ENCODE measurements at regions of chr17 and their contacts with region 1.

Region 1: GRCh38 chr17:4891411-4892342 is 7.7 kb upstream of the C17orf107 start:
- DNase-seq: no peak
- ATAC-seq: no peak
- H3K4me3 ChIP-seq: no peak overlapping the region
- H3K4me3 Mint-ChIP-seq: no peak overlapping the region
- H3K27ac ChIP-seq: no peak overlapping the region
- H3K27ac Mint-ChIP-seq: no peak overlapping the region
- H3K4me1 ChIP-seq: no peaks in the 10 kb centered on the region
- H3K4me1 Mint-ChIP-seq: peaks cover 0 to 5% of the 10 kb centered on the region in 2 donors
- H3K27me3 ChIP-seq: no peaks in the 10 kb centered on the region
- H3K27me3 Mint-ChIP-seq: no peaks in the 10 kb centered on the region
- CTCF ChIP-seq: no peak

Region 2: DNA sequence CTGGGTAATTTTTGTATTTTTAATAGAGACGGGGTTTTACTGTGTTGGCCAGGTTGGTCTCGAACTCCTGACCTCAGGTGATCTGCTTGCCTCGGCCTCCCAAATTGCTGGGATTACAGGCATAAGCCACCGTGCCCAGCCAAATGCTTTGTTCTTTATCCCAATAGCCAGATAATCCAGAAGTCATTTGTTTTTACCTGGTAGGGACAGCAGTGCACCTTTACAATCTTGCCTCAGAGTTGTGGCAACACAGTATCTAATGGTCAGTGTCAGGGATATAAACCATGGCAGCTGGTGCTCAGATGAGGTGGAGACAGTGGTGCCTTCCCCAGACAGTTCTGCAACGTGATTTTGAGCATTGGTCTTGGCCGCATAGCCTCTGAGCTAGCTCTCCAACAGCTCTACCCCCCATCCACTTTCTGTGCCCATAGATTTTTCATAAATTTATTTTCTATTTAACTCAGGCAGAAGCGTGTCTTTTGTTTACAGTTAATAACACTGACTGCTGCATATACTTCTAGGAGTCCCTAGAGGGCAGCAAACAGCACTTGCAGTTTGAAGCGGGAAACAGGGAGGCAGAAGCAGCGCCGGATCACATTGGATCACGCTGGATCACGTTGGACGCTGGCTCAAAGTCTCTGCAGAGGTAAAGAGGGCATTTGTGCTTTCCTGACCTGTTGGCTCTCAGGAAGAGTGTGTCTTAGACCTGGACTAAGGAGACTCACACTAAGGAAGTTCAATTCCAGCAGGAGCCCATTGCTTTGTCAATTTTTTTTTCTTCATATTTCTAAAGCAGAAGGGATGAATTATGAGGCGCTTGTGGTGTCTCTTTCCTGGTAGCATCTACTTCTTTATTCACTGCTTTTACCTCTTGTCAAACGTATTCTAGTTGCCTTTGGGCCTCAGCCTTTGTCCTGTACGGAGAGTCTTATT is 326.2 kb before region 1 on chr17:
- intact Hi-C with region 1: loop called (anchors 5 kb)
- DNase-seq: peak in 1 of 2 donors; percentile 82
- ATAC-seq: peak; percentile 73 to 94 (median 84)
- H3K4me3 ChIP-seq: no peak overlapping the region
- H3K4me3 Mint-ChIP-seq: peak overlapping the region; percentile 13
- H3K27ac ChIP-seq: no peak overlapping the region
- H3K27ac Mint-ChIP-seq: no peak overlapping the region
- H3K4me1 ChIP-seq: peaks cover 5% of the 10 kb centered on the region
- H3K4me1 Mint-ChIP-seq: peaks cover 10 to 20% of the 10 kb centered on the region in 2 donors
- H3K27me3 ChIP-seq: no peaks in the 10 kb centered on the region
- H3K27me3 Mint-ChIP-seq: peaks cover 0 to 7% of the 10 kb centered on the region in 2 donors
- CTCF ChIP-seq: peak; percentile 87

Region 3: DNA sequence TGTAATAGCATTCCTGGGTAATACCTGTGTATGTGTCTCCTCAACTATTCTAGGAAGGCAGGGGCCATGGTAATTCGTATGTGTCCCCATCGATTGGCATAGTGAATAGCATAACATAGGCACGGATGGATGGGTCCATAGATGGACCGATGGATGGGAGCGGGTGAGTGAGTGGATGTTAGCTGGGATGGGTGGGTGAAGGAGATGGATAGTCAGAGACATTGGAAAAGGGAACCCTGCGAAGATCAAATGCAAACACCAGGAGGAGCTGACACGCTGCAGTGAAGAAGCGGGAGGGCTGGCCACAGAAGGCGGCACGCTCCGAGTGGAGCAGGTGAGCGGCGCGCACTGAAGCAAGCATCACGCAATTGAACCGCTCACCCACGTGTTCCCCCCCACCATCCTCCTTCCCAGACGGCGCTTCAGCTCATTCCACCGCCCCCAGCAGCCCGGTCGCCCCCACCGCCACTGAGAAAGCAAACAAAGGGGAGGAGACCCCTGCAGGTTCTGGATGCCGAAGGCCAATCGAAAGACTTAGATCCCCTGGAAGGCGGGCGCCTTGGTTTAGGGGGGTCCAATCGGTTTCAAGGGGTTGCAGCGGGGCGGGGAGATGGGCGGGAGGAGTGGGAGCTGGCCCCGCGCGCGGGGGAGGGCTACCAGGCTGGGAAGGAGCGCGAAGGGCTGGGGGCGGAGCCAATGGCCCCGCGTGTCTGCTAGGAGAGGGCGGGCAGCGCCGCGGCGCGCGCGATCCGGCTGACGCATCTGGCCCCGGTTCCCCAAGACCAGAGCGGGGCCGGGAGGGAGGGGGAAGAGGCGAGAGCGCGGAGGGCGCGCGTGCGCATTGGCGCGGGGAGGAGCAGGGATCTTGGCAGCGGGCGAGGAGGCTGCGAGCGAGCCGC is 181.6 kb before region 1 on chr17 and contains the start of gene ARRB2:
- intact Hi-C with region 1: loop called (anchors 1 kb)
- DNase-seq: peak; percentile 96 to 100
- ATAC-seq: peak; percentile 86 to 96 (median 87)
- H3K4me3 ChIP-seq: peak within 1 kb of the TSS; percentile 96
- H3K4me3 Mint-ChIP-seq: peak within 1 kb of the TSS; percentile 95
- H3K27ac ChIP-seq: peak within 1 kb of the TSS; percentile 88
- H3K27ac Mint-ChIP-seq: peak within 1 kb of the TSS; percentile 90 to 93
- H3K4me1 ChIP-seq: peaks cover 50% of the 10 kb centered on the region
- H3K4me1 Mint-ChIP-seq: peaks cover 43 to 52% of the 10 kb centered on the region in 2 donors
- H3K27me3 ChIP-seq: no peaks in the 10 kb centered on the region
- H3K27me3 Mint-ChIP-seq: no peaks in the 10 kb centered on the region
- CTCF ChIP-seq: peak; percentile 71
- total RNA-seq, gene ARRB2: 314 to 374 (median 335) TPM

Region 4: DNA sequence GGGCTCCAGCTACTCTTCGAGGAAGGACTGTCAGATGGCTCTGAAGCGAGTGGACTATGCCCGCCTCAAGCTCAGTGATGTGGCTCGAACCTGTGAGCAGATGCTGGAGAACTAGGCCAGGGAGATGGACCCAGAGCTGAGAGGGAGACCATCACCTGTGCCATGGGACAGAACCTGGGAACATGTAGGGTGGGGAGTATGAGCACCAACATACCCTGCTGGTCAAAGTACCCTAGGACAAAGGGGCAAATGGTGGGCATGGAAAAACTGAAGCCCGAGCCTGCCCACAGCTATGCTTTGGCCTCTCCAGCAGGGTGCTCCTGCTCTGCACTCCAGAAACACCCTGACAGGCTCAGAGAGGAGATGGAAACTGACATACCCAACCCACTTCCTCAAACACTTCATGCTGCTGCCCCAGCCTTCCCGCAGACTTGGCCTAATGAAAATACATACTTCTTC is 158.6 kb before region 1 on chr17:
- intact Hi-C with region 1: loop called (anchors 1 kb)
- DNase-seq: no peak
- ATAC-seq: no peak
- H3K4me3 ChIP-seq: no peak overlapping the region
- H3K4me3 Mint-ChIP-seq: no peak overlapping the region
- H3K27ac ChIP-seq: no peak overlapping the region
- H3K27ac Mint-ChIP-seq: peak overlapping the region in 1 of 2 donors; percentile 38
- H3K4me1 ChIP-seq: peaks cover 36% of the 10 kb centered on the region
- H3K4me1 Mint-ChIP-seq: peaks cover 12 to 13% of the 10 kb centered on the region in 2 donors
- H3K27me3 ChIP-seq: no peaks in the 10 kb centered on the region
- H3K27me3 Mint-ChIP-seq: peaks cover 1 to 5% of the 10 kb centered on the region in 2 donors
- CTCF ChIP-seq: no peak

Region 5: DNA sequence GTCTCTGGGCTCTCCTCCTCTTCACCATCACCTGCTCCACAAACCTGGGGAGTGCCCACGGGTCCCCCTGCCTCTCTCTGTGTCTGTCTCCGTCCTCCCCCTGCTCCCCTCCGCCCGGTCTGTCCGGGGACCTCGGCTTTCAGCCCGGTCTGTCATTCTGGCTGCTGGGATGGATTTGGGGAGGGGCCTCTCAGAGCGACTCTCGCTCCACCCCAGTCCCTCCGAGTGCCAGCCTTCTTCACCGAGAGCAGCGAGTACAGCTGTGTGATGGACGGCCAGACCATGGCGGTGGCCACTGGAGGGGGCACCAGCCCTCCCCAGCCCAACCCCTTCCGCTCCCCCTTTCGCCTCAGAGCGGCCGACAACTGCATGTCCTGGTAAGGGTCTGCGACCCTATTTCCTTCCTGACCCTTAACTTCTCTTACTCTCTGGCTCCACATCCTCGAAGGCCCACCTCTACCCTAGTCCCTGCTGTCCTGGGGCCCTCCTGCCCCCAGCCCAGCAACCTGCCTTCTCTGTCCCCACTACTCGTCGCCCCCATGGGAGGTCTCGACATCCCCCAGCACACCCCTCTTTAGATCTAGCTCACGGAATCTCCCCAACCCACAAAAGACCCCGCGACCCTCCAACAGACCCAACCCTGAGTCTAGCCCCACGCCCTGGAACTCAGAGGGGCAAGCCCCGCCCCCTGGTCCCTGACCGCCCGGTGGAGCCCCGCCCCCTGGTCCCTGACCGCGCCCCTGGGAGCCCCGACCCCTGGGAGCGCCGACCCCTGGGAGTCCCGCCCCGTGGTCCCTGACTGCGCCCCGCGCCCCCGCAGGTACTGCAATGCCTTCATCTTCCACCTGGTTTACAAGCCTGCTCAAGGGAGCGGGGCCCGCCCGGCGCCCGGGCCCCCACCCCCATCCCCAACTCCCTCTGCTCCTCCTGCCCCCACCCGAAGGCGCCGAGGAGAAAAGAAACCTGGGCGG is 146.4 kb before region 1 on chr17:
- intact Hi-C with region 1: no loop called
- DNase-seq: no peak
- ATAC-seq: peak in 1 of 3 donors; percentile 28
- H3K4me3 ChIP-seq: no peak overlapping the region
- H3K4me3 Mint-ChIP-seq: no peak overlapping the region
- H3K27ac ChIP-seq: no peak overlapping the region
- H3K27ac Mint-ChIP-seq: peak overlapping the region in 1 of 2 donors; percentile 22
- H3K4me1 ChIP-seq: peaks cover 15% of the 10 kb centered on the region
- H3K4me1 Mint-ChIP-seq: peaks cover 15 to 29% of the 10 kb centered on the region in 2 donors
- H3K27me3 ChIP-seq: peaks cover 14% of the 10 kb centered on the region
- H3K27me3 Mint-ChIP-seq: peaks cover 28 to 56% of the 10 kb centered on the region in 2 donors
- CTCF ChIP-seq: no peak

Region 6: DNA sequence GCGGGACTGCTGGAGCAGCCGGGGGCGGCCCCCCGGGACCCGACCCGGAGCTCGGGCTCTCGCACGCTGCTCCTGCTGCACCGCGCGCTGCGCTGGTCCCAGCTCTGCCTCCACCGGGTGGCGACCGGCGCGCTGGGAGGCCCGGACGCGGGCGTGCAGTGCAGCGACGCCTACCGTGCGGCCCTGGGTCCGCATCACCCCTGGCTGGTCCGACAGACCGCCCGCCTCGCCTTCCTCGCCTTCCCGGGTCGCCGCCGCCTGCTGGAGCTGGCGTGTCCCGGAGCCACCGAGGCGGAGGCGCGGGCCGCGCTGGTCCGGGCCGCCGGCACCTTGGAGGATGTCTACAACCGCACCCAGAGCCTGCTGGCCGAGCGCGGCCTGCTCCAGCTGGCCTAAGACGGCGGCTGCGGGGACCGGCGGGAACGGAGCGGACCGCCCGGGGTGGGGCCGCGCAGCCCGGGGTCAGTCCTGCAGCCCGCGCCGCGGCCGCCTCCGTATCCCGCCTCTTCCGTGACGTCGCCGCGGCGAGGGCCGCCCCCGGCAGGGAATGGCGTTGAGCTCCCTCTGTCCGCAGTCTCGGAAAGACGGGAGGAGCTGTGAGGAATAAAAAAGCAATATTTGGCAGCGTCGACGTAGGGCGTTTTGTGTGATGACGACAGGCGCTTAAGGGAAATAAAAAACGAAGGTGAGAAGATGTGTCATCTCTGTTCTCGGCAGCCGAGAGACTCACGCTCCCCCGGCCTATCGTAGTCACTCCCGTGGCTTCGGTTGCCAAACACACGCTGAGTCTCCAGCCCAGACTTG is 101.6 kb before region 1 on chr17:
- intact Hi-C with region 1: loop called (anchors 1 kb)
- DNase-seq: peak; percentile 78 to 90
- ATAC-seq: peak; percentile 79 to 92 (median 82)
- H3K4me3 ChIP-seq: peak overlapping the region; percentile 59
- H3K4me3 Mint-ChIP-seq: peak overlapping the region; percentile 93
- H3K27ac ChIP-seq: peak overlapping the region; percentile 79
- H3K27ac Mint-ChIP-seq: peak overlapping the region; percentile 85
- H3K4me1 ChIP-seq: peaks cover 33% of the 10 kb centered on the region
- H3K4me1 Mint-ChIP-seq: peaks cover 13 to 16% of the 10 kb centered on the region in 2 donors
- H3K27me3 ChIP-seq: peaks cover 24% of the 10 kb centered on the region
- H3K27me3 Mint-ChIP-seq: peaks cover 19 to 21% of the 10 kb centered on the region in 2 donors
- CTCF ChIP-seq: peak; percentile 84

Region 7: GRCh38 chr17:4903051-4903818 is 11.6 kb after region 1 on chr17 and contains the start of gene CHRNE:
- intact Hi-C with region 1: loop called (anchors 1 kb)
- DNase-seq: peak; percentile 64 to 92
- ATAC-seq: peak; percentile 57 to 71 (median 57)
- H3K4me3 ChIP-seq: peak within 1 kb of the TSS; percentile 13
- H3K4me3 Mint-ChIP-seq: peak within 1 kb of the TSS; percentile 83
- H3K27ac ChIP-seq: peak within 1 kb of the TSS; percentile 88
- H3K27ac Mint-ChIP-seq: peak within 1 kb of the TSS; percentile 93 to 94
- H3K4me1 ChIP-seq: peaks cover 56% of the 10 kb centered on the region
- H3K4me1 Mint-ChIP-seq: peaks cover 37 to 41% of the 10 kb centered on the region in 2 donors
- H3K27me3 ChIP-seq: peaks cover 10% of the 10 kb centered on the region
- H3K27me3 Mint-ChIP-seq: no peaks in the 10 kb centered on the region
- CTCF ChIP-seq: peak; percentile 80
- total RNA-seq, gene CHRNE: 11.8 to 17.9 (median 11.8) TPM

Measured in natural killer cell (primary cell).